ENCODE measurements at regions of chr2 and their contacts with region 1.

Region 1: GRCh38 chr2:149017116-149017985 is 21.1 kb upstream of the LYPD6B start:
- DNase-seq: peak; percentile 32 to 42
- ATAC-seq: peak in 1 of 2 donors; percentile 53
- H3K4me3 ChIP-seq: no peak overlapping the region
- H3K27ac ChIP-seq: no peak overlapping the region
- H3K4me1 ChIP-seq: no peaks in the 10 kb centered on the region
- H3K27me3 ChIP-seq: no peaks in the 10 kb centered on the region
- CTCF ChIP-seq: peak; percentile 55 to 85 (median 61)
- POLR2A ChIP-seq: no peak

Region 2: DNA sequence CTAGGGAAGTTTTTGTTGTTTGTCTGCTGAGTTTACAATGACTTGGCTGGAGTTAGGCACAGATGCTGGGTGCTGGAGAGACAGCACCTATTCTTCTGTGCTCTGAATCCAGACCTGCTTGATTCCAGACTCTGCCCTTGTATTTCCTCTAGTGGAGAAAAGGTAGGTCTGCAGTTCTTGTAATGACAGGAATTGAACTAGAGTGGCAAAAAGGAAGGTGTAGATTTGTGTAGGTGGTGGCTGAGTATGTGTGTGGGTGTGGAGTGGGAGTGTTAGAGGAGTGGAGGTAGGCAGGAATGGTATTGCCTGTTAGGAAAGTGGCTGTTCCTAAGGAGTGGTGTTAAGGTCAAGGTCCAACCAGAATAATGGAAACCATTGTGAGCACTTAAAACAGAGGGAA is 241.2 kb after region 1 on chr2:
- in situ Hi-C with region 1: no loop called
- intact Hi-C with region 1: no loop called
- DNase-seq: no peak
- ATAC-seq: no peak
- H3K4me3 ChIP-seq: no peak overlapping the region
- H3K27ac ChIP-seq: no peak overlapping the region
- H3K4me1 ChIP-seq: no peaks in the 10 kb centered on the region
- H3K27me3 ChIP-seq: no peaks in the 10 kb centered on the region
- CTCF ChIP-seq: no peak
- POLR2A ChIP-seq: no peak

Region 3: GRCh38 chr2:149375801-149376361 is 358.5 kb after region 1 on chr2:
- in situ Hi-C with region 1: no loop called
- intact Hi-C with region 1: no loop called
- DNase-seq: no peak
- ATAC-seq: no peak
- H3K4me3 ChIP-seq: no peak overlapping the region
- H3K27ac ChIP-seq: no peak overlapping the region
- H3K4me1 ChIP-seq: no peaks in the 10 kb centered on the region
- H3K27me3 ChIP-seq: no peaks in the 10 kb centered on the region
- CTCF ChIP-seq: no peak
- POLR2A ChIP-seq: no peak

Region 4: DNA sequence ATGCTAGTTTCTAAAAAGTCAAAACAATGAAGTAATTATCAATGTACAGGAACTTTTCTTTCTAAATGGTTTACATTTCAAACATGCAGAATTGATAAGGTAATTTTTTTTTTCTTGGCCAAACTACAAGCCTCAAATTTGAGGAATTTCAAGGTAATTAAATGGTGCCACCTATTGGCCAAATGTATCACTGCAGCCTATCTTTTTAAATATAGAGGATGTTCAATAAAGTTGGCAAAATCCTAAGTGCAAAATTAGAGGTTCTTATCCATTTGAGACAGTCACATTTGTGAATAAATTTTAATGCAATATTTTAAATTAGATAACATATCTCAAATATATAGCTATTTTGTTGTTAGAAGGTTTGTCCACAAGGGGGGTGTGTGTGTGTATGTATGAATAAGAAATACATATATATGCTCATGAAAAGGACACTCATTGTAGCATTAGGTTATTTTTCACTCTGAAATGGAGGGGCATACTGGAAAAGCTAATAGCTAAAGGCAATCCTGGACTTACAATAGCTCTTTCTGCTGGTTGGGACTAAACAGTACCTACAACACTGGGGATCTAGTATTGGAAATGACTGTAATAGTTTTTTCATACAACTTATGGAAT is 544.1 kb after region 1 on chr2:
- in situ Hi-C with region 1: loop called (anchors 5 to 10 kb)
- intact Hi-C with region 1: loop called (anchors 1 kb)
- DNase-seq: no peak
- ATAC-seq: no peak
- H3K4me3 ChIP-seq: no peak overlapping the region
- H3K27ac ChIP-seq: no peak overlapping the region
- H3K4me1 ChIP-seq: no peaks in the 10 kb centered on the region
- H3K27me3 ChIP-seq: no peaks in the 10 kb centered on the region
- CTCF ChIP-seq: peak; percentile 57 to 93 (median 87)
- POLR2A ChIP-seq: no peak

Region 5: DNA sequence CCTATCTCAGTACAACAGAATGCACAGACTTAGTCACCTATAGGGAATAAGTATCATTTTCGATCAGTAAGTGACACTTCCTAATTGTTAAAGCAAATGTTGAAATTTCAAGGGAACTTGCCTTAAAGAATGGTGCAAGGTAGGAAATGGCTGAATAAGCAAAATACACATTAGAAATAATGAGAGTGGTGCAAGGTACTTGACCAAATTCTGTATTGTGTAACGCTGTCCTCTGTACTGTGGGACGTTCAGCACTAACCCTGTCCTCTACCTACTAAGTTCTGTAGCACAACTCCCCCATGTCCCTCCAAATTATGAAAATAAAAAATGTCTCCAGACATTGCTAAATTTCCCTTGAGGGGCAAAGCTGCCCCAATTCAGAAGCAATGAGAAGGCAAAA is 550.8 kb after region 1 on chr2:
- in situ Hi-C with region 1: loop called (anchors 5 to 10 kb)
- intact Hi-C with region 1: no loop called
- DNase-seq: no peak
- ATAC-seq: no peak
- H3K4me3 ChIP-seq: no peak overlapping the region
- H3K27ac ChIP-seq: no peak overlapping the region
- H3K4me1 ChIP-seq: peaks cover 5 to 14% of the 10 kb centered on the region in 2 donors
- H3K27me3 ChIP-seq: no peaks in the 10 kb centered on the region
- CTCF ChIP-seq: no peak
- POLR2A ChIP-seq: no peak

Measured in gastrocnemius medialis (tissue), 4 donors.